ENCODE measurements at regions of chr7 and their contacts with region 1.

Region 1: GRCh38 chr7:37181550-37181932 is 267.1 kb downstream of the ELMO1 start:
- DNase-seq: no peak
- H3K4me3 Mint-ChIP-seq: no peak overlapping the region
- H3K27ac Mint-ChIP-seq: no peak overlapping the region
- H3K4me1 Mint-ChIP-seq: peaks cover 13% of the 10 kb centered on the region
- H3K27me3 Mint-ChIP-seq: no peaks in the 10 kb centered on the region

Region 2: DNA sequence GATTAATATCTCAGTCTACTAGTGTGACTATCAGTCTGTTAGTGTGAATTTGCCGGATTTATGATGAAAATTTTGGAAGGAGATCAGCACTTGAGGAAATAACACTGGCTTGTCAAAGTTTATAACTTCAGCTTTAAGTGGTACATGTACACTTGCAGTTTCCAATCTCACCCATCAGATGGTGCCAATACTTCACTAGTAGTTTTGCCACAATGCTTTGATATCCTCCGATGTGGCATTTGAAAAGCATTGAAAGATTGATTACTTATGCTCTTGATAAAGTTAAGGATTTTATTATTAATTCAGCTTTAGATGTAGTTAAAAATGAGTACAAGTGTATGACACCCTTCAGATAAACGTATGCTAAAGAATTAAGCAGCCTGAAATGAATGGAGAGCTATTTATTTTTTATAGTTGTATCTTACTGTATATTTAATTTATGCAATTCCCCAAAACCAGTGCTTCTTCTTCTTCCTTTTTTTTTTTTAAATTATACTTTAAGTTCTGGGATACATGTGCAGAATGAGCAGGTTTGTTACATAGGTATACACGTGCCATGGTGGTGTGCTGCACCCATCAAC is 693.7 kb before region 1 on chr7:
- CTCF ChIA-PET with region 1: interaction called, 18 read pairs
- POLR2A ChIA-PET with region 1: no interaction called
- DNase-seq: peak; percentile 64
- H3K4me3 Mint-ChIP-seq: no peak overlapping the region
- H3K27ac Mint-ChIP-seq: no peak overlapping the region
- H3K4me1 Mint-ChIP-seq: peaks cover 1% of the 10 kb centered on the region
- H3K27me3 Mint-ChIP-seq: peaks cover 3% of the 10 kb centered on the region

Region 3: DNA sequence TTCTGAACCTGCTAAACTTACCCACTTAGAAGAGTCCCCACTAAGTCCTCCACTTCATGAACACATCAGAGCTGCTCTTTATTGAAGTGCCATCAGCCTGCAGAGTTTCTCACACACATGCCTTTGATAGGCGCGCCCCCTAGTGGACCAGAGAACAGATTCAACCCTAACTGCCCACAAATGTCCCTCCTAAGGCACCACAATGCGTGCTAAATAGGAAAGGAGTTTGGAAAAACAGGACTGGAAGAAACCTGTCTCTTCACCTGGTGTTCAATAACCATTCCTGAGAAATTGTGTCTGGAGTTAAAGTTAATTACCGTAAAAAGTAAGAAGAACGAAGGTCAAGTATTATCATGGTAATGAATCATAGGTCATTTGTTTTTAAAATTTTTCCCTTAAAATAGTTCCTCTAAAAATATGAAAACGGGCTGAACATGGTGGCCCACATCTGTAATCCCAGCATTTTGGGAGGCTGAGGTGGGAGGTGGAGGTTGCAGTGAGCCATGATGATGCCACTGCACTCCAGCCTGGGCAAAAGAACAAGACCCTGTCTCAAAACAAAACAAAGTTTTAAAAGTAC is 17.5 kb after region 1 on chr7:
- CTCF ChIA-PET with region 1: interaction called, 11 read pairs
- POLR2A ChIA-PET with region 1: no interaction called
- DNase-seq: peak; percentile 83
- H3K4me3 Mint-ChIP-seq: no peak overlapping the region
- H3K27ac Mint-ChIP-seq: no peak overlapping the region
- H3K4me1 Mint-ChIP-seq: peaks cover 4% of the 10 kb centered on the region
- H3K27me3 Mint-ChIP-seq: no peaks in the 10 kb centered on the region

Region 4: DNA sequence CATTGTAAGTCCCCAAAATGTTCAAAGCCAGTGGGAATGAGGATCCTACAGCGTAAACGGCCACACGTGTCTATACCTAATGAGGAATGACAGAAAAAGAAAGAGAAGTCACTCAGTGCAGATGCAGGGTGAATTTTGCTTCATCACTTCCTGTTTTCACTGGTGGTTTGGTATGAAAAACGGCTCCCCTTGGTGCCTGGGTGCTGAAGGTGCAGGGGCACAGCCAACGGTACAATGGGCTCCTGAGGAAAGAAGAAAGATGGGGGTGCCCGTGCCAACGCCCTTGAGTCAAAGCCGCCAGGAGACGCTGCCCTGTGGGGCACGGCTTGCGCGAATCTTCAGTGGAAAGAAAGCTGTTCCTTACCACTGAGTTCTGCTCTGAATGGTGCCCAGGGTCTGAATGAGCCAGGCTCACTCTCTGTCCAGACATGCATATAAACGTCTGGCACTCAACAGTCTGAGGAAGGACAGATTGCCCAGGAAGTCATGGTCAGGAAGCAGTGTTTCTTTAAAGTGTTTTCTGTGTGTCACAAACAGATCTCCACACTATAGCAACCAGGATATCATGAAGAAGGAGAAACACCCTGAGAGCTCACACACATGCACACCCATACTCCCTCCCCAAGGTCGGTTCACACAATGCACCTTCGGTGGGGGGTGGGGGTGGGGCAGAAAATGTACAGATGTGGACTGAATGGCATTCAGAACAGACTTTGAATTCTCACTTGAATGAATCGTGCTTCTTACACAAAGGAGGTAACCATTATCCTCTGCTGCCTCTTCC is 161.3 kb after region 1 on chr7:
- CTCF ChIA-PET with region 1: no interaction called
- POLR2A ChIA-PET with region 1: no interaction called
- DNase-seq: peak; percentile 82
- H3K4me3 Mint-ChIP-seq: peak overlapping the region; percentile 90
- H3K27ac Mint-ChIP-seq: peak overlapping the region; percentile 96
- H3K4me1 Mint-ChIP-seq: peaks cover 69% of the 10 kb centered on the region
- H3K27me3 Mint-ChIP-seq: no peaks in the 10 kb centered on the region

Measured in activated CD4-positive, alpha-beta T cell treated with anti-CD3 and anti-CD28 coated beads, Interleukin-2, amount 10 ng/mL, durations not matched to agents 7 days and 5 days (primary cell).